ENCODE measurements at regions of chr9 and their contacts with region 1.

Region 1: GRCh38 chr9:34072868-34073590 is 24.3 kb upstream of the UBAP2 start:
- DNase-seq: peak; percentile 96
- ATAC-seq: peak; percentile 88
- H3K4me3 ChIP-seq: no peak overlapping the region
- H3K27ac ChIP-seq: peak overlapping the region; percentile 87
- H3K4me1 ChIP-seq: peaks cover 14% of the 10 kb centered on the region
- H3K27me3 ChIP-seq: no peaks in the 10 kb centered on the region
- CTCF ChIP-seq: no peak
- POLR2A ChIP-seq: no peak
- RAD21 ChIP-seq: no peak; the same call in 1 of the 2 replicates

Region 2: GRCh38 chr9:33737811-33738606 is 335.0 kb before region 1 on chr9:
- CTCF ChIA-PET with region 1: interaction called, 5 read pairs
- POLR2A ChIA-PET with region 1: no interaction called
- dilution Hi-C with region 1: no loop called
- in situ Hi-C with region 1: no loop called
- intact Hi-C with region 1: loop called (anchors 1 kb)
- DNase-seq: peak; percentile 62
- ATAC-seq: peak; percentile 95
- H3K4me3 ChIP-seq: no peak overlapping the region
- H3K27ac ChIP-seq: no peak overlapping the region
- H3K4me1 ChIP-seq: peaks cover 2% of the 10 kb centered on the region; the same call in 1 of the 2 replicates
- H3K27me3 ChIP-seq: peaks cover 7% of the 10 kb centered on the region
- CTCF ChIP-seq: peak; percentile 78
- POLR2A ChIP-seq: no peak
- RAD21 ChIP-seq: peak; percentile 84

Region 3: GRCh38 chr9:33924978-33925797 is 147.8 kb before region 1 on chr9:
- CTCF ChIA-PET with region 1: interaction called, 9 read pairs
- POLR2A ChIA-PET with region 1: no interaction called
- dilution Hi-C with region 1: no loop called
- in situ Hi-C with region 1: no loop called
- intact Hi-C with region 1: loop called (anchors 1 kb)
- DNase-seq: peak; percentile 54
- ATAC-seq: peak; percentile 80
- H3K4me3 ChIP-seq: no peak overlapping the region
- H3K27ac ChIP-seq: no peak overlapping the region
- H3K4me1 ChIP-seq: no peaks in the 10 kb centered on the region
- H3K27me3 ChIP-seq: no peaks in the 10 kb centered on the region
- CTCF ChIP-seq: peak; percentile 65
- POLR2A ChIP-seq: no peak
- RAD21 ChIP-seq: peak; percentile 60

Region 4: DNA sequence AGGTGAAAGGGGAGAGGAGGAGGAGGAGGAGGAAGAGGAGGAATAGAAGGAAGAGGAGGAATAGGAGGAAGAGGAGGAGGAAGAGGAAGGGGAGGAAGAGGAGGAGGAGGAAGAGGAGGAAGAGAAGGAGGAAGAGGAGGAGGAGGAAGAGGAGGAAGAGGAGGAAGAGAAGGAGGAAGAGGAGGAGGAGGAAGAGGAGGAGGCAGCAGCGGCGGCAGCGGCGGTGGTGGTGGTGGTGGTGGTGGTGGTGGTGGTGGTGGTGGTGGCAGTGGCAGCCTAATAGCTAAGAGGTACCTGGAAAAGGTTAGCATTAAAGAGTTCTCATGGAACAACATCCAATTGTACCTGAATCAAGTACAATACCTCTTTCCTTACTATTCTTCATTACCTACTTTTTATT is 56.9 kb before region 1 on chr9:
- CTCF ChIA-PET with region 1: no interaction called
- POLR2A ChIA-PET with region 1: interaction called, 12 read pairs
- dilution Hi-C with region 1: no loop called
- in situ Hi-C with region 1: no loop called
- intact Hi-C with region 1: no loop called
- DNase-seq: no peak
- ATAC-seq: no peak
- H3K4me3 ChIP-seq: no peak overlapping the region
- H3K27ac ChIP-seq: no peak overlapping the region
- H3K4me1 ChIP-seq: no peaks in the 10 kb centered on the region
- H3K27me3 ChIP-seq: no peaks in the 10 kb centered on the region
- CTCF ChIP-seq: no peak
- POLR2A ChIP-seq: no peak
- RAD21 ChIP-seq: no peak

Region 5: GRCh38 chr9:34139477-34140146 is 66.6 kb after region 1 on chr9:
- CTCF ChIA-PET with region 1: no interaction called
- POLR2A ChIA-PET with region 1: interaction called, 14 read pairs
- dilution Hi-C with region 1: no loop called
- in situ Hi-C with region 1: no loop called
- intact Hi-C with region 1: no loop called
- DNase-seq: peak; percentile 91
- ATAC-seq: peak; percentile 95
- H3K4me3 ChIP-seq: no peak overlapping the region
- H3K27ac ChIP-seq: no peak overlapping the region
- H3K4me1 ChIP-seq: no peaks in the 10 kb centered on the region
- H3K27me3 ChIP-seq: no peaks in the 10 kb centered on the region
- CTCF ChIP-seq: peak; percentile 53
- POLR2A ChIP-seq: no peak
- RAD21 ChIP-seq: peak; percentile 48

Region 6: DNA sequence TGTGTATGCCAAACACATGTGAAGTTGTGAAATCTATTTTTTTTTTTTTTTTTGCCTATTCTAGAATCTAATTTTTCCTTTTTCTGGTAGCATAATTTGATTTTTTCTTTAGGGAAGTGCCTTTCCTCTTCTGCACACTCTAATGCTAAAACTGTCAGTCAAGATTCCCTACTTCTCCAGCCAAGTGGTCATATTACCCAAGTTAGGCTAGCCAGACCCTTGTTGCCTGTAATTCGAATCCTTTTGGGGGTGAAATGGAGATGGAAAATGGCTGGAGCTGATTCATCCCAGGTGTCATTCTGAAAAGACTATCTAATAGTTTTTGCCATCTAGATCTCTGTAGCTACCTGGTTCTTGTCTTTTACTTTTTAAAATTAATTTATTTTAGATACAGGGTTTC is 81.0 kb after region 1 on chr9:
- CTCF ChIA-PET with region 1: no interaction called
- POLR2A ChIA-PET with region 1: no interaction called
- dilution Hi-C with region 1: no loop called
- in situ Hi-C with region 1: no loop called
- intact Hi-C with region 1: no loop called
- DNase-seq: no peak
- ATAC-seq: no peak
- H3K4me3 ChIP-seq: no peak overlapping the region
- H3K27ac ChIP-seq: no peak overlapping the region
- H3K4me1 ChIP-seq: peaks cover 4% of the 10 kb centered on the region
- H3K27me3 ChIP-seq: peaks cover 5% of the 10 kb centered on the region
- CTCF ChIP-seq: no peak
- POLR2A ChIP-seq: no peak
- RAD21 ChIP-seq: no peak